ENCODE measurements at regions of chr12 and their contacts with region 1.

Region 1: GRCh38 chr12:751192-751998 is 984 bp upstream of the WNK1 start:
- DNase-seq: peak; percentile 68 to 93
- ATAC-seq: peak; percentile 34 to 52 (median 45)
- H3K4me3 ChIP-seq: peak overlapping the region; percentile 97
- H3K4me3 Mint-ChIP-seq: no peak overlapping the region
- H3K27ac ChIP-seq: peak overlapping the region; percentile 76
- H3K27ac Mint-ChIP-seq: no peak overlapping the region
- H3K4me1 ChIP-seq: peaks cover 13% of the 10 kb centered on the region
- H3K4me1 Mint-ChIP-seq: peaks cover 34% of the 10 kb centered on the region in 2 donors
- H3K27me3 ChIP-seq: no peaks in the 10 kb centered on the region
- H3K27me3 Mint-ChIP-seq: no peaks in the 10 kb centered on the region
- CTCF ChIP-seq: peak; percentile 41

Region 2: DNA sequence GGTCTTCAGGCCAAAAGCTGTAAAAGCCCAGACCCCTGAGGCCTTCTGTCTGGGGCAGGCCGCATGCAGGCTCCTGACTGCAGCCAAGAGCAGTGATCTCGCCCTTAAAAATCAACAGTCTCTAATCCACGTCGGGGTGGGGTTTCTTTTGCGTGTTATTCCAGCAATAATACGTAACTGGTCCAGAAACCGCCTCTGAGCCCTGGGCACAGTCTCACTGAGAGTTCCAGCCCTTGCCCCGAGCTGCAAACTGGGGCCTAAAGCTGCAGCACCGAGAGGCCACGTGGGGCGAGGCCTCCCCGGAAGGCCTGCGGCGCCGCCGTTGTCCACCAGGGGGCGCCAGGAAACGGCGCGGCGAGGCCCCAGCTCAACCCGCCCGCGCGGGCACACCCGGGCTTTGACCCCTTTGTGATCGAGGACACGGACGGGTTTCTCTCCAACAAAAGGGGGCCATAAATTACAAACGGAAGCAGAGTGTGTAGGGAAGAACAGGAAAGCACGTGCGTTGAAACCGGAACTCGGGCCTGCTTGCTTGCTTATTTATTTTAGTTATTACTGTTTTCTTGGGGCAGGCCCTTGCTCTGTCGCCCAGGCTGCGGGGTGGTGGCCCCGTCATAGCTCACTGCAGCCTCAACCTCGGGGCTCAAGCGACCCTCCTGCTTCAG is 175.3 kb before region 1 on chr12:
- intact Hi-C with region 1: loop called (anchors 2 kb)
- DNase-seq: peak; percentile 88 to 90
- ATAC-seq: peak; percentile 96 to 100 (median 96)
- H3K4me3 ChIP-seq: peak overlapping the region; percentile 14
- H3K4me3 Mint-ChIP-seq: peak overlapping the region; percentile 80
- H3K27ac ChIP-seq: no peak overlapping the region
- H3K27ac Mint-ChIP-seq: peak overlapping the region in 1 of 2 donors; percentile 72
- H3K4me1 ChIP-seq: peaks cover 13% of the 10 kb centered on the region
- H3K4me1 Mint-ChIP-seq: peaks cover 6 to 19% of the 10 kb centered on the region in 2 donors
- H3K27me3 ChIP-seq: no peaks in the 10 kb centered on the region
- H3K27me3 Mint-ChIP-seq: peaks cover 0 to 6% of the 10 kb centered on the region in 2 donors
- CTCF ChIP-seq: peak; percentile 98

Region 3: GRCh38 chr12:642633-643474 is 108.5 kb before region 1 on chr12:
- intact Hi-C with region 1: loop called (anchors 2 kb)
- DNase-seq: peak; percentile 75 to 90
- ATAC-seq: peak; percentile 81 to 91 (median 90)
- H3K4me3 ChIP-seq: peak overlapping the region; percentile 63
- H3K4me3 Mint-ChIP-seq: peak overlapping the region; percentile 89
- H3K27ac ChIP-seq: peak overlapping the region; percentile 92
- H3K27ac Mint-ChIP-seq: peak overlapping the region; percentile 91 to 94
- H3K4me1 ChIP-seq: peaks cover 28% of the 10 kb centered on the region
- H3K4me1 Mint-ChIP-seq: peaks cover 24 to 45% of the 10 kb centered on the region in 2 donors
- H3K27me3 ChIP-seq: no peaks in the 10 kb centered on the region
- H3K27me3 Mint-ChIP-seq: no peaks in the 10 kb centered on the region
- CTCF ChIP-seq: peak; percentile 33

Region 4: GRCh38 chr12:685388-685787 is 66.0 kb before region 1 on chr12:
- intact Hi-C with region 1: loop called (anchors 1 kb)
- DNase-seq: peak; percentile 78 to 95
- ATAC-seq: peak; percentile 88 to 98 (median 93)
- H3K4me3 ChIP-seq: no peak overlapping the region
- H3K4me3 Mint-ChIP-seq: peak overlapping the region; percentile 59
- H3K27ac ChIP-seq: peak overlapping the region; percentile 88
- H3K27ac Mint-ChIP-seq: peak overlapping the region; percentile 87 to 96
- H3K4me1 ChIP-seq: peaks cover 28% of the 10 kb centered on the region
- H3K4me1 Mint-ChIP-seq: peaks cover 19 to 30% of the 10 kb centered on the region in 2 donors
- H3K27me3 ChIP-seq: no peaks in the 10 kb centered on the region
- H3K27me3 Mint-ChIP-seq: no peaks in the 10 kb centered on the region
- CTCF ChIP-seq: no peak

Region 5: DNA sequence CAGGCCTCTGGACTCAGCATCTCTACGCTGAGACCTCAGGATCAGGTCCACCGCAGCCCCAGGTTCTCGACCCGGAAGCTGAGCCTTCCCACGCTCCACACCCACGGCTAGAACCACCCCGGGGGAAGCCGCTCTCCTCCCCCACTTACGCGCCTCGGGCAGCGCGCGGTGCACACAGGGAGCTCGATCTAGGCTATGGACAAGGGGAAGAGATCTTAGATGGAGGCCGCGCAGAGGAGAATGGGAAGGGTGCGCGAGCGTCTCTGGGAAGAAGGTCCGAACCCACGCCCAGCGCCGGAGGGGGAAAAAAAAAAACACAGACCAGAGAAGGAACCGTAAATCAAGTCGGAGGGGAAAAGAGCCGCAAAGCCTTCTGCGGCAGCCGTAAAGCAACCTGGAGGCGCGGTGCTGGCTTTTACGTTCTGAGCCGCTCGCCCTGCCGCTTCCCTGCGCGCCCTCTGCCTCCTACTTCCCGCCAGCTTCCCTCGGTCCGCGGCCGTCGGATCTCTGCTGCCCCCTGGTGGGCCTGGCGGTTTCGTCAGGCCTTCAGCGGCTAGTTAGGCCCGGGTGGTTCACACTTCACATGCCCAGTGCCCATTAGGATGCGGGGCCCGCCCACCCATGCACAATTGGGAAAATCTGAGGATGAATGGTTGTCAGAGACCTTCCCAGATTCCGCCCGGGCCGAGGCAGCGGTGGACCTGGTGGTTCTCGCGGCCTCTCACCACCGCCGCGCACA is 198.2 kb after region 1 on chr12 and contains the start of gene RAD52:
- intact Hi-C with region 1: loop called (anchors 5 kb)
- DNase-seq: peak; percentile 93 to 98
- ATAC-seq: peak; percentile 90 to 97 (median 91)
- H3K4me3 ChIP-seq: peak within 1 kb of the TSS; percentile 78
- H3K4me3 Mint-ChIP-seq: peak within 1 kb of the TSS; percentile 98
- H3K27ac ChIP-seq: peak within 1 kb of the TSS; percentile 54
- H3K27ac Mint-ChIP-seq: peak within 1 kb of the TSS; percentile 95 to 97
- H3K4me1 ChIP-seq: peaks cover 15% of the 10 kb centered on the region
- H3K4me1 Mint-ChIP-seq: peaks cover 26 to 28% of the 10 kb centered on the region in 2 donors
- H3K27me3 ChIP-seq: no peaks in the 10 kb centered on the region
- H3K27me3 Mint-ChIP-seq: no peaks in the 10 kb centered on the region
- CTCF ChIP-seq: peak; percentile 91
- total RNA-seq, gene RAD52: 9.4 to 15.5 (median 13.7) TPM

Measured in natural killer cell (primary cell).